ENCODE measurements at regions of chr16 and their contacts with region 1.

Region 1: DNA sequence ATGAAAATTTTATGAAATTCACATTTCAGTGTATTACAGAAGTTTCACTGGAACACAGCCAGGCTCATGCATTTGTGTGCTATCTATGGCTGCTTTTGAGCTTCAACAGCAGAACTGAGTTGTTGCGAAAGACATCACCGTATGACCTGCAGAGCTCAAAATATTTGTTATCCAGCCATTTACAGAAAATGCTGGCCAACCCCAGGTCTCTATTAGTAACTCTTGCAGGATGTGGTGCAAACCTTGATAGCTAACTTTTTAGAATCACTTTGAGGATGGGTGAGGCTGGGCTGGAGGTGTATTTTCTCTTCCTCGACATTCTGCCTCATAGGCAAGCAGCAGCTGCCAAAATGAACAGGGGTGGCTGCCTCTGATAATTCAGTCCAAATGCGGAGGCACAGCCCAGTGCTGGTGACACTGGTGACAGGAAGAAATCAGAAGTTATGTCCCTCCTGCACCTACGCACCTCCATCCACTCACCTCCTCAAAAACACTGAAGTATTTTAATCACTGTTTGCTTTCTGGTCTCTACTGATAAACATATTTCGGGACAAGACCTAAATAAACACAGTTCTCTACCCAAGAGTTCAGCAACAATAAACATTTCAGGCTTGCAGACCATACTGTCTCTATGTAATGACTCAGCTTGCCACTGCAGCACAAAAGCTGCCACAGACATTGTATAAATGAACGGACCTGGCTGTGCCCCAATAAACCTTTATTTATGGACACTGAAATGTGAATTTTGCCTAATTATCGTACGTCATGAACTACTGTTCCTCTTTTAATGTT is 28.5 kb downstream of the ARHGAP17 start:
- DNase-seq: peak; percentile 31 to 66
- ATAC-seq: peak; percentile 67 to 81; a peak in 5 of 6 replicates
- H3K4me3 ChIP-seq: peak overlapping the region; percentile 14
- H3K27ac ChIP-seq: peak overlapping the region; percentile 83 to 84
- H3K4me1 ChIP-seq: peaks cover 66% of the 10 kb centered on the region
- CTCF ChIP-seq: no peak
- EP300 ChIP-seq: no peak
- POLR2A ChIP-seq: no peak
- RAD21 ChIP-seq: peak in 1 of 2 experiments; percentile 10; a peak in 1 of 5 replicates

Region 2: DNA sequence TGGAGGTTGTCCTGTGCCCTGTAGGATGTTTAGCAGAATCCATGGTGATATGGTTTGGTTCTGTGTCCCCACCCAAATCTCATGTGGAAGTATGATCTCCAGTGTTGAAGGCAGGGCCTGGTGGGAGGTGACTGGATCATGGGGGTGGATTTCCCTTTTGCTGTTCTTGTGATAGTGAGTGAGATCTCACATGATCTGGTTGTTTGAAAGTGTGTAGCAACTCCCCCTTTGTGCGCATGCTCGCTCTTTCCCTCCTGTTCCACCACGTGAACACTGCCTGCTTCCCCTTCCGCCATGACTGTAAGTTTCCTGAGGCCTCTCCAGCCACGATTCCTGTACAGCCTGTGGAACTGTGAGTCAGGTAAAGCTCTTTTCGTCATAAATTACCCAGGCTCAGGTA is 33.4 kb before region 1 on chr16:
- CTCF ChIA-PET with region 1: no interaction called
- POLR2A ChIA-PET with region 1: no interaction called
- DNase-seq: no peak
- ATAC-seq: no peak
- H3K4me3 ChIP-seq: no peak overlapping the region
- H3K27ac ChIP-seq: no peak overlapping the region
- H3K4me1 ChIP-seq: peaks cover 7% of the 10 kb centered on the region; the same call in 2 of the 3 replicates
- CTCF ChIP-seq: no peak
- EP300 ChIP-seq: no peak
- POLR2A ChIP-seq: no peak
- RAD21 ChIP-seq: no peak

Region 3: DNA sequence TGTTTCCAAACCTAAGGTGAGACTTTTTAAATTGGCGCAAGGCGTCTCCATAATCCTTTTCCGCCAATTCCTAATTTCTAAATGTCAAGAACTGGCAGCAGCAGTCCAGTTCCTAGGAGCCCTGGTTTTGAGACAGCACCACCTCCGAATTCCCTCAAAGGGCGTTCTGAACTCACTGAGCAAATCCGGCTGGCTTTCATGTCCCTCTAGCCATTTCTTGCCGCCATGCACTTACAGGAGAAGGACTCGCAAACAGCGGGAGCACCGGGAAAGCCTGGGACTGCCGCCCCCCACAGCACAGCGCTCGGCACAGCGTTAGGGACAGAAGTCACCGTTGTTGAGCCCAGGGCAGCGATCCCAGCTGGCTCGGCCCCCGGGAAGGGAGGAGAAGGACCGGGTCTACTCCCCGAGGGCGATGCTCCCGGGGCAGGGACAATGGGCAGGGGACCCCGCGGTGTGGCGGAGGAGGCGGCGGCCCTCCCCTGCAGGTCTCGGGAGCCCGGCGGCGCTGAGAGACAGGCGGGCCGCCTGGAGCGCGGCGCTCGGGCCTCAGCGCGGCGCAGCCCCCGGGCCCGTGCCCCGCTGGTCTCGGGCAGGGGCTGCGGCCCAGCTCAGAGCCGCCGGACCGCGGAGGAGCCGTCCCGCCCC is 27.9 kb after region 1 on chr16:
- CTCF ChIA-PET with region 1: interaction called, 5 read pairs
- POLR2A ChIA-PET with region 1: interaction called, 10 read pairs
- DNase-seq: peak; percentile 28 to 47
- ATAC-seq: peak; percentile 39 to 67
- H3K4me3 ChIP-seq: peak overlapping the region; percentile 79
- H3K27ac ChIP-seq: peak overlapping the region; percentile 80 to 95
- H3K4me1 ChIP-seq: peaks cover 33% of the 10 kb centered on the region
- CTCF ChIP-seq: no peak
- EP300 ChIP-seq: no peak
- POLR2A ChIP-seq: no peak
- RAD21 ChIP-seq: peak in 1 of 2 experiments; percentile 20; a peak in 2 of 5 replicates

Region 4: GRCh38 chr16:25089351-25089750 is 102.6 kb after region 1 on chr16:
- CTCF ChIA-PET with region 1: no interaction called
- POLR2A ChIA-PET with region 1: no interaction called
- DNase-seq: no peak
- ATAC-seq: no peak
- H3K4me3 ChIP-seq: no peak overlapping the region
- H3K27ac ChIP-seq: no peak overlapping the region
- H3K4me1 ChIP-seq: no peaks in the 10 kb centered on the region
- CTCF ChIP-seq: no peak
- EP300 ChIP-seq: no peak
- POLR2A ChIP-seq: no peak
- RAD21 ChIP-seq: no peak

Region 5: DNA sequence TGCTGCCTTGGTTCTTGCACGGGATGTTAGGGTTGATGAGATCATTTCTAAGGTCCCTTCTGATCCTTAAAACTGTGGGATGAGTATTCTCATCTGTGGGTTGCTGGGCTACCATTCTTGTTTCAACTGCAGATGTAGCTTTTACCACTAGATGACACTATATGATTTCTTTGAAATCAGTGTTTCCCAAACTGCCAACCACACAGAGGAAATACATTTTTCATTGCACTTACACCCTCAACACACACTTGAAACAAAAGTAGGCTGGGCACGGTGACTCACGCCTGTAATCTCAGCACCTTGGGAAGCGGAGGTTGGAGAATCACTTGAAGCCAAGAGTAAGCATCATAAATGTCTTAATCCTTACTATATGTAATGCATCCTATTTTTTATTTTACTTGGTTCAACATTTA is 140.1 kb after region 1 on chr16:
- CTCF ChIA-PET with region 1: no interaction called
- POLR2A ChIA-PET with region 1: no interaction called
- DNase-seq: peak; percentile 60 to 65
- ATAC-seq: peak; percentile 84 to 92
- H3K4me3 ChIP-seq: no peak overlapping the region
- H3K27ac ChIP-seq: no peak overlapping the region
- H3K4me1 ChIP-seq: peaks cover 4% of the 10 kb centered on the region; the same call in 1 of the 3 replicates
- CTCF ChIP-seq: peak; percentile 73
- EP300 ChIP-seq: no peak
- POLR2A ChIP-seq: no peak
- RAD21 ChIP-seq: peak; percentile 71 to 83

Measured in A549 (cell line).